GM12878 (cell line): ENCODE measurements at regions of chr2 and their contacts with region 1.

Region 1: DNA sequence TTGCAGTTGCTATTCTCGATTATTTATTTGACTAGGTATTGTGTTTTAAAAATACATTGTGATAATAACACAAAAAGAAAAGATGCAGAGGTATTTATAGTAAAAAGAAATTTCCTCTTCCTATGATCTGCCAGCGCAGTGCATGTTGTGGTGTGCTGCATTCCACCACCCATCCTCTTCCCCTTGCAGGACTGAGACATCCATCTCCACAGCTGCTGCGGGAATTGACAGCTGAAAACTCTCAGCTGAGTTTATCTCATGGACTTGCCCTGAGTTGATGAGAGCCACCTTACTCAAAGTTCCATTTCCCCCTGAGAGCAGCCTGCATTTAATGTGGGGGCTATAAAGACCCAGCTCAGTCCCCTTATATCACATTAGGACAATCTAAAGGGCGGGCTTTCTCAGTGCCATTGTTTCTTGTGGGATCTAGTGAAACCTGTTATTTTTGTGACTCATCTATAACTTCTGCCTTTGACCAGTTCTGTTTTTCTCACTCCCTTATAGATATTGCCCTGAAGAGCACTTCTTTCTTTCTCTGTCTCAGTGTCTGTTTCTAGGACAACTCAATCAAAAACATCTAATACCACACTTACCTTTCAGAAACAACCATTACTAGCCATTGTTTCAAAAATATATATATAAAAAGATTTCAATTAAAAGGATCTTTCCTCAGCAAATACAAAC is 698.5 kb downstream of the NR4A2 start:
- DNase-seq: peak; percentile 40
- ATAC-seq: peak; percentile 99
- H3K4me3 ChIP-seq: no peak overlapping the region
- H3K27ac ChIP-seq: no peak overlapping the region
- H3K4me1 ChIP-seq: no peaks in the 10 kb centered on the region; the same call in 1 of the 2 replicates
- H3K27me3 ChIP-seq: no peaks in the 10 kb centered on the region
- CTCF ChIP-seq: no peak
- EP300 ChIP-seq: peak; percentile 57 to 81; a peak in 3 of 4 replicates
- POLR2A ChIP-seq: no peak
- RAD21 ChIP-seq: no peak

Region 2: DNA sequence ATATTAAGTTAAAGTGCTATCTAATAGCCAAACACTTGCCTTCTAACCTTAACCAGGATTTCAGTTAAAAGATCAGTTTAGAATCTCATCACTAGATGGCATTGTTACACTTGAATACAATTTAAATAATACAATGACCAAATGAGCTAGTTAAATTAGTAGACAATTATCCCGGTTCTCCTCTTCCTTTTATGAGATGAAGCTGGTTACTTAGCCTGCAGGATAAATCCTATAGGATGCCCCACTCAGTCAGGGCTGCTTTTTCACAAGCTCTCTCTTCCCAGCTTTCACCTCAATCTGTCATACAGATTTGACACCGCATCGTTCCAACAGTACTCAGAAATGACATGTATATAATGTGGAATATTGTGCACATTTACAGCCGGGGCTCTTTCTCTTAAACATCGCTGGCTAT is 256.8 kb before region 1 on chr2:
- CTCF ChIA-PET with region 1: no interaction called
- POLR2A ChIA-PET with region 1: no interaction called
- RAD21 ChIA-PET with region 1: no interaction called
- SMC1A ChIA-PET with region 1: no interaction called
- in situ Hi-C with region 1: no loop called
- intact Hi-C with region 1: loop called (anchors 5 kb)
- DNase-seq: no peak
- ATAC-seq: peak; percentile 73
- H3K4me3 ChIP-seq: no peak overlapping the region
- H3K27ac ChIP-seq: no peak overlapping the region
- H3K4me1 ChIP-seq: no peaks in the 10 kb centered on the region
- H3K27me3 ChIP-seq: no peaks in the 10 kb centered on the region
- CTCF ChIP-seq: peak in 2 of 3 experiments; percentile 10 to 17; a peak in 3 of 6 replicates
- EP300 ChIP-seq: no peak
- POLR2A ChIP-seq: no peak
- RAD21 ChIP-seq: peak; percentile 50